HEK293 (cell line): ENCODE measurements at regions of chr15 and their contacts with region 1.

Region 1: DNA sequence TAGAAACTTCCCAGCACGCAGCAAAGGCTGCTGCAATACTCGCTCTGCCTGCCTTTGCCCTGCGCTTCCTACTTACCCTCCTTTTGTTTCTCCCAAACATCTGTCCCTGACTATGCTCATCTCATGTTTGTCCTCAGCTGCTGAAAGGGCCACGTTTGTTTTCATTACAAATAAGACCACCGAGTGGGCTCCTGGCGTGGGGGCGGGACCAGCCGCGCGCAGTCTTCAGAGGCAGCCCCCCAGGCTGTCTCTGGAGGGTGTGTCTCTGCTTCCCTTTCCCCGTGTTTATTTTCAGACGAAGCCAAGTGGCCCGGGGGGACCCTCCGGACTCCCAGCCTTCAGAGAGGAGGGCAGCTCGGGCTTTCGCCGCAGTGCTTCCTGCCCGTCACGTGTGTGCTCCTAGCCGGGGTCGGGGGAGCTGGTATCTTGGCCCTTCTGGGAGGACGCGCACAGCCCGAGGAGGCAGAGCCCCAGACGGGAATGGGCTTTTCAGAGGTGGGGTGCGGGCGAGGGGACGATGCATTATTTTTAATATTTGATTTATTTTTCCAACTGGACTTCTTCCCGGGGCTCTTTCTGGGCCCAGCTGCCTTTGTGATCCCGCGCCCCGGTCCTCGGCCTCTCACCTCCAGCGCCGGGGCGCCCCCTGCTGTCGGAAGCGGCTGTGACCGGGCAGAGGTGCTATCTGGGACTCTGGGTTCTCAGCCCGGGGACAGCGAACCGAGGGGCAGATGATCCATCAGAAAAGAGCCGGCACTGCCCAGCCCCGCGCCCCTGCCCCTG is 70.0 kb upstream of the CGNL1 start:
- H3K4me3 ChIP-seq: peak overlapping the region; percentile 35
- H3K27ac ChIP-seq: no peak overlapping the region; the same call in 1 of the 2 replicates
- H3K4me1 ChIP-seq: no peaks in the 10 kb centered on the region
- CTCF ChIP-seq: peak; percentile 48; the same call in 1 of the 2 replicates

Region 2: GRCh38 chr15:57146506-57147201 is 159.7 kb before region 1 on chr15:
- CTCF ChIA-PET with region 1: interaction called, 33 read pairs
- POLR2A ChIA-PET with region 1: no interaction called
- H3K4me3 ChIP-seq: no peak overlapping the region
- H3K27ac ChIP-seq: no peak overlapping the region
- H3K4me1 ChIP-seq: peaks cover 5% of the 10 kb centered on the region; the same call in 1 of the 2 replicates
- CTCF ChIP-seq: no peak

Region 3: GRCh38 chr15:57356636-57357035 is 50.3 kb after region 1 on chr15:
- CTCF ChIA-PET with region 1: no interaction called
- POLR2A ChIA-PET with region 1: no interaction called
- H3K4me3 ChIP-seq: no peak overlapping the region
- H3K27ac ChIP-seq: no peak overlapping the region
- H3K4me1 ChIP-seq: no peaks in the 10 kb centered on the region
- CTCF ChIP-seq: no peak

Region 4: GRCh38 chr15:57462381-57462780 is 156.0 kb after region 1 on chr15:
- CTCF ChIA-PET with region 1: no interaction called
- POLR2A ChIA-PET with region 1: no interaction called
- H3K4me3 ChIP-seq: no peak overlapping the region
- H3K27ac ChIP-seq: no peak overlapping the region
- H3K4me1 ChIP-seq: no peaks in the 10 kb centered on the region
- CTCF ChIP-seq: no peak